ENCODE measurements at regions of chr15 and their contacts with region 1.

Region 1: GRCh38 chr15:90143166-90143655 is 40.9 kb upstream of the IDH2 start:
- DNase-seq: peak; percentile 26 to 75
- ATAC-seq: peak; percentile 81 to 85 (median 82)
- H3K4me3 ChIP-seq: no peak overlapping the region
- H3K4me3 Mint-ChIP-seq: no peak overlapping the region
- H3K27ac ChIP-seq: no peak overlapping the region
- H3K27ac Mint-ChIP-seq: peak overlapping the region in 1 of 2 donors; percentile 62
- H3K4me1 ChIP-seq: peaks cover 11% of the 10 kb centered on the region
- H3K4me1 Mint-ChIP-seq: peaks cover 6 to 15% of the 10 kb centered on the region in 2 donors
- H3K27me3 ChIP-seq: no peaks in the 10 kb centered on the region
- H3K27me3 Mint-ChIP-seq: no peaks in the 10 kb centered on the region
- CTCF ChIP-seq: peak; percentile 58

Region 2: DNA sequence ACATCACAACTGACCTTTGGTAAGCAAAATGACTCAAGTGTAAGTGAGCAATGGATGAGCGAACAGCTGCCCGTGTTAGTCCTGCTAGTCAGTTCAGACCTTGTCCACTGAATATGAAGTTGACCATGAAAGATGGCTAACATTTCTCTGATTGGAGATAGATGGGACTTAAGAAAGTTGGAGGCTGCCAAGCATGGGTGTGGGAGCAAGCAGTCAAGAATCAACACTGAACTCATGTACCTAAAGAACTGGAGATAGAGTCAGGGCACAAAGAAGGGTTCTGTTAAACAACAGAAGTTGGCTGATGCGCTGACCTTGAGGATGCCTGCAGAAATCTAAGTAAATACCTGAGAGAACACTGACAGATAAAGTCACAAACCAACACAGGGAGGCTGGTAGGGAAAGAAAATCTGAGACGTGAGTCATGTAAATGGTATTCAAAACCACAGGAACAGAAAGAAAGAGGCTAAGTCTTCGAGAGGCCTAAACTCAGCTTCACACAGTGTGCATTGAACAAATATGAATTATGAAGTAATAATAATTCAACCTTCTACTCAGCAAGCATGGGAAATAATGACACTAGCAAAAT is 297.8 kb before region 1 on chr15:
- intact Hi-C with region 1: no loop called
- DNase-seq: no peak
- ATAC-seq: no peak
- H3K4me3 ChIP-seq: no peak overlapping the region
- H3K4me3 Mint-ChIP-seq: no peak overlapping the region
- H3K27ac ChIP-seq: no peak overlapping the region
- H3K27ac Mint-ChIP-seq: no peak overlapping the region
- H3K4me1 ChIP-seq: no peaks in the 10 kb centered on the region
- H3K4me1 Mint-ChIP-seq: peaks cover 0 to 4% of the 10 kb centered on the region in 2 donors
- H3K27me3 ChIP-seq: no peaks in the 10 kb centered on the region
- H3K27me3 Mint-ChIP-seq: no peaks in the 10 kb centered on the region
- CTCF ChIP-seq: no peak

Region 3: DNA sequence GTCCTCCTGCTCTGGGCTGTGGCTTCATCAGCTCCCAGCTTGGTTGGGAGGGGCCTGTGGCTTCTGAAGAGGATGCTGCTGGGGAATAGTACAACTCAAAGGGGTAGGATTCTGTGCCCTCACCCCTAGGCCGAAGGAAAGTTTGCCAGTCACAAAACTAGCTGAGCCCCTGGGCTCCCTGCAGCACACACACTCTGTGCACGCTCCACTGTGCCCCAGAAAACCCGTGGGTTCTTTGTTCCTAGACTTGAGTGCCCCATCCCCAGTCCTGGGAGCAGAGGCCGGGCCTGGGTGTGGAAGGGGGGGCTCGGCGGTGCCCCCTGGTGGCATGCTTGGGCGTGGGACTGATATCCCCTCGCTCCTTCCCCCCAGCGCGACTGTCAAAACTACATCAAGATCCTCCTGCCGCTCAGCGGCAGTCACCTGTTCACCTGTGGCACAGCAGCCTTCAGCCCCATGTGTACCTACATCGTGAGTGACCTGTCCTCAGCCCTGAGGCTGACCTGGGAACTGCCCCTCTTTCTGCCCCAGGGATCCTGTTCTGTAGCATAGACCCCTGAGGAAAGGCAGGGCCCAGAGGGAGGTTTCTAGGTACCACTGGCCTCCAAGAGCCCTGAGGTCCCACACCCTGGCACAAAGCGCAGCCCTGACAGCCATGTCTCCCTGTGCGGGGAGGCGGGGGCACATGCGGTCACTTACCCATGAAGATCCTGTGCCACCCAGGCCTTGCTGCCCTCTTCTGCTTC is 76.4 kb after region 1 on chr15:
- intact Hi-C with region 1: loop called (anchors 1 kb)
- DNase-seq: peak; percentile 43 to 77
- ATAC-seq: peak in 2 of 3 donors; percentile 82 to 84
- H3K4me3 ChIP-seq: no peak overlapping the region
- H3K4me3 Mint-ChIP-seq: no peak overlapping the region
- H3K27ac ChIP-seq: no peak overlapping the region
- H3K27ac Mint-ChIP-seq: no peak overlapping the region
- H3K4me1 ChIP-seq: peaks cover 10% of the 10 kb centered on the region
- H3K4me1 Mint-ChIP-seq: peaks cover 4 to 5% of the 10 kb centered on the region in 2 donors
- H3K27me3 ChIP-seq: no peaks in the 10 kb centered on the region
- H3K27me3 Mint-ChIP-seq: no peaks in the 10 kb centered on the region
- CTCF ChIP-seq: peak; percentile 59

Region 4: GRCh38 chr15:90286678-90287077 is 143.5 kb after region 1 on chr15:
- intact Hi-C with region 1: loop called (anchors 5 kb)
- DNase-seq: peak in 1 of 2 donors; percentile 78
- ATAC-seq: peak; percentile 76 to 90 (median 90)
- H3K4me3 ChIP-seq: no peak overlapping the region
- H3K4me3 Mint-ChIP-seq: no peak overlapping the region
- H3K27ac ChIP-seq: no peak overlapping the region
- H3K27ac Mint-ChIP-seq: no peak overlapping the region
- H3K4me1 ChIP-seq: no peaks in the 10 kb centered on the region
- H3K4me1 Mint-ChIP-seq: no peaks in the 10 kb centered on the region
- H3K27me3 ChIP-seq: no peaks in the 10 kb centered on the region
- H3K27me3 Mint-ChIP-seq: no peaks in the 10 kb centered on the region
- CTCF ChIP-seq: peak; percentile 63